Activated CD4-positive, alpha-beta T cell treated with anti-CD3 and anti-CD28 coated beads for 36 hours (primary cell): ENCODE measurements at regions of chr17 and their contacts with region 1.

Region 1: GRCh38 chr17:82098072-82098821 is at the start of gene FASN:
- DNase-seq: peak; percentile 97
- ATAC-seq: peak; percentile 86
- H3K4me3 Mint-ChIP-seq: peak within 1 kb of the TSS; percentile 78
- H3K27ac Mint-ChIP-seq: peak within 1 kb of the TSS; percentile 19
- H3K4me1 Mint-ChIP-seq: peaks cover 14% of the 10 kb centered on the region
- H3K27me3 Mint-ChIP-seq: no peaks in the 10 kb centered on the region
- total RNA-seq, gene FASN: 239 to 259 TPM

Region 2: DNA sequence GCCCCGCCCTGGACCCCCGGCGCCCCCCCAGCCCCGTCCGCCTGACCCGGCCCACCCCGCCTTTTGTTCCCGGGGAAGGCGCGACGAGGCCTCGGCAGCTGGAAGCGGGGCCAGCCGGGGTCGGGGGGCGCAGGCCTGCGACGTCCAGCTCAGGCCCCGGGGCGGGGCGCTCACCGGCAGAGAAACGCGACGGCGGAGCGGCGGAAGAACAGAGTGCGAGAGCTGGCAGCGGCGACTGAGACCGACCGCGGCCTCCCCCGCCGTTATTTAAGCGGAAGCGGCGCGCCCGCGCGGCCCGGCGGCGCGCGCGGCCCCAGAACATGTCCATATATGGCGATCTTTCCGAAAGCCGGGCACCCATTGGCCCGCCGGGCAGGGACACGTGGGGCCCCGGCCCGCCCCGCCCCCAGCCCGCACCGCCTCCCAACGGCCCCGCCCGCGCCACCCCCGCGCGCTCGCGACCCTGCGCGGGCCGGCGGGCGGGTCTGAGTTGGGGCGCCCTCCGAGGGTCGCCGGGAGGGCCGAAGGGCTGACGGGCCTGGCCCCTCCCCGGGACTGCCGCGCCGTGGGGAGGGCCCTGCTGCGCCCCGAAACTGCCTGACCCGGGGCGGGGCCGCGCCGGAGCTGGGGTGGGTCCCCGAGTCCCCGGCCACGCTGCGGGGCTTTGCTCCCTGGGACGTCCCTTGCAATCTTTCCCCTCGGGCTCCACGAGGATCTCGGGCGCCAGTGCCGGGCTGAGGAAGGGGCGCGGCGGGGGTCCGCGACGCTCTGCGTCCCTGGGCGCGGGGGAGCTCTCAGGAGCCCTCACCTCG is 585.5 kb before region 1 on chr17 and contains the start of gene ACTG1:
- CTCF ChIA-PET with region 1: no interaction called
- POLR2A ChIA-PET with region 1: no interaction called
- intact Hi-C with region 1: loop called in 1 of 2 experiments (anchors 2 kb)
- DNase-seq: peak; percentile 95
- ATAC-seq: peak; percentile 61
- H3K4me3 Mint-ChIP-seq: peak within 1 kb of the TSS; percentile 97
- H3K27ac Mint-ChIP-seq: peak within 1 kb of the TSS; percentile 89
- H3K4me1 Mint-ChIP-seq: peaks cover 21% of the 10 kb centered on the region
- H3K27me3 Mint-ChIP-seq: no peaks in the 10 kb centered on the region
- total RNA-seq, gene ACTG1: 4,119 to 5,987 TPM

Region 3: DNA sequence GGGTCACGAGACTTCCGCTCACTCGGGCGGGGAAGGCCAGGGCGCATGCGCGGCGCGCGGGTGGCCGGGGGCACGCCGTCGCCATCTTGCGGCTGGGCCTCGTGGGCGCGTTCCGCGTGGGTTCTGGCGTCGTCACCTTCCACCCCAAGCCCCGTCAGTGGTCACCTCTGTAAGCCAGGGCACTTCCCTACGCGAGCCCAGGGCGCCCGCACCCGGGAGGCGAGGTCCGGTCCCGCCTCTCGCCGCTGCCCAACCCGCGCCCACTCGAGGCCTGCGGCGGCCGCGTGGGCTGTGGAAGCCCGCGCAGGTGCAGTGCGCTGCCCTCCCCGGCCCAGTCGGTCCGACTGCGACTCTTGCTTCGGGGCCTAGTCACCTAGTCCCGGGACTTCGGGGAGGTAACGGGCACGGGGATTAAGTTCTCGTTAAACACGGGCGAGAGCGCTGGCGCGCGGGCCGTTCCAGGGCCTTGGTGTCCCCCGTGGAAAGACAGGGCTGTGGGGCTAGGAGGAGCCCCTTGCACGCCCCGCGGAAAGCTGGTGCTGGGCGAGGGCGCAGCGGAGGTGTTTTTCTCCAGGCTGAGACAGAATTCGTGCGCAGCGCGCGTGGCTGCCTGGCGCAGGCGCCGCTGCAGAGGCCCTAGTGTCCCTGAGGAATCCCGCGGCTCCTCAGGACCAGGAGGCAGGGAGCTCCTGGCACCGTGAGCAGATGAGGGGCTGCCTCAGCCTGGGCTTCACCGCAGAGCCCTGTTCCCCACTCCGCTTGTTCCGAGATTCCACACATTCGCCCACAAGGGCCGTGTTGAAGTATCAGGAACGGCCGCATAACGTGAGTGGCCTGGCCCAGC is 226.6 kb before region 1 on chr17:
- CTCF ChIA-PET with region 1: no interaction called
- POLR2A ChIA-PET with region 1: no interaction called
- intact Hi-C with region 1: loop called in 1 of 2 experiments (anchors 1 kb)
- DNase-seq: peak; percentile 98
- ATAC-seq: no peak
- H3K4me3 Mint-ChIP-seq: peak overlapping the region; percentile 81
- H3K27ac Mint-ChIP-seq: peak overlapping the region; percentile 92
- H3K4me1 Mint-ChIP-seq: peaks cover 34% of the 10 kb centered on the region
- H3K27me3 Mint-ChIP-seq: no peaks in the 10 kb centered on the region

Region 4: DNA sequence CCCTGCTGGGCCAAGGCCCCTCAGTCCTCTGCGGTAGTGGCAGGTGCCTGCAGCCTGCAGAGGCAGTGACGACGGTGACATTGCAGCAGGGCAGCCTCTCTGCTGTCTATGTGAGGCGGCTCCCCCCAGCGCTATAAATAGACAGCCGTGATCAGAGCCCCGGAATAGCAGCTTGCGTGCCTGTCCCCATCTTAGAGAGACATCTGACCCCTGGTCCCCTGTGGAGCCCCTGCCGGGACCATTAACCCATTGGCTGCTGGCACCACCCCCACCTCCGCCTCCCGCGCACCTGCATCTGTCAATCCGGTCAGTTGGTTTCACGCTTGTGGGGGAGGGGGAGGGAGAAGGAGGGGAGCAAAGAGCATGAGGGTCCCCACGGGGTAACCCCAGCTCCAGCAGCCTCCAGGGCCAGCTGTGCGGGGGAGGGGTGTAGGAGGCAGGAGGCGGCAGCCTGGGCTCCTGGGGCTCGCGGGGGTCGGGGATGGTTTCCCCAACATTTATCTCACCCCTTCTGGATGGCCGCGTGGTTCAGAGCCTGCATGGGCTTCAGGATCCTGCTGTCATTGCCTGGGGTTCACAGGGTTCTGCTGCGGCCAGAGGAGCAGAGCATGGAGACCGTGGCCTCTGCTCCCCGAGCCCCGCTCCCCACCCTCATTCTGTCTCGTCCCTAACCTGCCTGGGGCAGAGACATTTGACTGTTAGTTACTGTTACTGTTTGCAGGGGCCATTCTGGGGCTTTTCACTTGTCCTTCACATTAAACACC is 156.3 kb before region 1 on chr17:
- CTCF ChIA-PET with region 1: no interaction called
- POLR2A ChIA-PET with region 1: no interaction called
- intact Hi-C with region 1: loop called in 1 of 2 experiments (anchors 1 kb)
- DNase-seq: no peak
- ATAC-seq: no peak
- H3K4me3 Mint-ChIP-seq: no peak overlapping the region
- H3K27ac Mint-ChIP-seq: no peak overlapping the region
- H3K4me1 Mint-ChIP-seq: peaks cover 5% of the 10 kb centered on the region
- H3K27me3 Mint-ChIP-seq: peaks cover 5% of the 10 kb centered on the region

Region 5: DNA sequence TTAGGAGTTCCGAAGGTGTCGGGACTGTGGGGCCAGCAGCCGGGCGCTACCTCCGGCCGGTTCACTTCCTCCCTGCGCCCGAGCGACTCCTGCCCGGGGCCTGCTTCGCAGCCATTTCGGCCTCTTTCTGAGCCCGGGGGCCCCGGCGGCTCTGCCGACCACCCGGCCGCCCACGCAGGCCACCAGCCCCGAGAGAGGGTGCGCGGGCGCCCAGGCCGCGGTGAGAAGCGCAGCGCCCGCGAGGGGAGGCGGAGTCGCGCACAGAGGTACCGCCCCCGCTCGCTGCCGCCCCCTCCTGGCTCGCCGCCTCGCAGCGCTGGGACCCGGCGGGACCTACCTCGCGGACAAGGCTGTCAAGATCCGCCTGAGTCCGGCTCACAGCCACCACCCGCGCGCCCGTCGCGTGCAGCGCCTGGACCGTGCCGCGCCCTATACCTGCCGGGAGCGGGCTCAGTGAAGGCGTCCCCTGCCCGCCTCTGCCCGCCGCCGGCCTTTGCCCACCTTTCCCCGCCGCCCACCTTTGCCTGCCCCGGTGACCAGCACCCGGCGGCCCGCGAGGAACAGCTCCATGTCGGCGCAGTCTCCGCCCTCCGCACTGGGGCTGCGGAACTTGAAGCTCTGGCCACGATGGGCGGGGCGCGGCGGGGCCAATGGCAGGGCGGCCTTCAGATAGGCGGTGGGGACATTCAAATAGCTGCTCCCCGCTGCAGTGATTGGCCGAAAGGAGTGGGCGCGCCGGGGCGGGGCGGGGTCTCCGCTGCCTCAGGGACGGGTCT is 60.9 kb before region 1 on chr17 and contains the start of gene DCXR:
- CTCF ChIA-PET with region 1: interaction called, 6 read pairs
- POLR2A ChIA-PET with region 1: interaction called, 11 read pairs
- intact Hi-C with region 1: loop called in 1 of 2 experiments (anchors 1 kb)
- DNase-seq: peak; percentile 97
- ATAC-seq: peak; percentile 97
- H3K4me3 Mint-ChIP-seq: peak within 1 kb of the TSS; percentile 82
- H3K27ac Mint-ChIP-seq: peak within 1 kb of the TSS; percentile 80
- H3K4me1 Mint-ChIP-seq: peaks cover 23% of the 10 kb centered on the region
- H3K27me3 Mint-ChIP-seq: no peaks in the 10 kb centered on the region
- total RNA-seq, gene DCXR: 105 to 166 TPM

Region 6: DNA sequence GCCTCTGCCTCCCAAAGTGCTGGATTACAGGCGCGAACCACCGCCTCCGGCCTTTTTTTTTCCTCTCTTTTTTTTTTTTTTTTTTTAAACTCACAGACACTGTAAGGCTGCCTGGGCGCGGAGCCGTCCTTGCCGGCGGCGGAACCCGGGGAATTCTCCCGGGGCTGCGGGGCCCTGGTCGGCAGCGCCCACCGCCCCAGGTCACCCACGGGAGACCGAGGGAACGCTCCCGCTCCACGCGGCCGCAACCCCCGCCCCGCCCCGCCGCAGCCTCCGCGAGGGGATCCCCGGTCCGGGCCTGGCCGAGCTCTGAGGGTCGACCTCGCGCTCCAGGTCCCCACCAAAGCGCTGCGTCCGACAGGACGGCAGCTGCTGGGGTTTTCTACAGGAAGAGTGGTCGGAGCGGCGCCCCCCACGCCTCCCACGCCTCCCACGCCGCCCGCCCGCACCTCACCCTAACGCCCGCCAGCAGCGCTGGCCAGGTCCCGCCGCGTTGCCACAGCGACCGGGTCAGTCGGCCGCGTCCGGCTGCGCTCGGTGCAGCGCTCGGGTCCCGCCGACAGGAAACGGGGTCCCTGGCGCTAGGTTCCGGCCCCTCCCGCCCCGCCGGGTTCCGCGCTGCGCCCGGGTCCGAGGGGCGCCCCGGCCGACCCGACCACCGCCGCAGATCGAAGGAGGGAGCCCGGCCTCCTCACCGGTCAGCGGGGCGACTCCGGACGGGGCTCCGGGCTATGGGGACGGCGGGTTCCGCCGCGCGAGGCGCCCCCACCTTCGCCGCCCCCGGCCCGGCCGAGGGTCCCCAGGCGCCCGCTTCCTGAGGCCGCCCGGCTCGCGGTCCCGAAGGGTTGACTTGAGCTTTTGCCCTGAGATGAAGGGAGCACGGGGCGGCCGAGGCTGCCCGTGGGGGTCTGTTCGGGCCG is 114.3 kb after region 1 on chr17 and contains the start of gene CCDC57:
- CTCF ChIA-PET with region 1: no interaction called
- POLR2A ChIA-PET with region 1: no interaction called
- intact Hi-C with region 1: loop called in 1 of 2 experiments (anchors 2 kb)
- DNase-seq: peak; percentile 88
- ATAC-seq: peak; percentile 67
- H3K4me3 Mint-ChIP-seq: peak within 1 kb of the TSS; percentile 76
- H3K27ac Mint-ChIP-seq: peak within 1 kb of the TSS; percentile 66
- H3K4me1 Mint-ChIP-seq: peaks cover 39% of the 10 kb centered on the region
- H3K27me3 Mint-ChIP-seq: no peaks in the 10 kb centered on the region
- total RNA-seq, gene CCDC57: 41.6 to 43.8 TPM

Region 7: DNA sequence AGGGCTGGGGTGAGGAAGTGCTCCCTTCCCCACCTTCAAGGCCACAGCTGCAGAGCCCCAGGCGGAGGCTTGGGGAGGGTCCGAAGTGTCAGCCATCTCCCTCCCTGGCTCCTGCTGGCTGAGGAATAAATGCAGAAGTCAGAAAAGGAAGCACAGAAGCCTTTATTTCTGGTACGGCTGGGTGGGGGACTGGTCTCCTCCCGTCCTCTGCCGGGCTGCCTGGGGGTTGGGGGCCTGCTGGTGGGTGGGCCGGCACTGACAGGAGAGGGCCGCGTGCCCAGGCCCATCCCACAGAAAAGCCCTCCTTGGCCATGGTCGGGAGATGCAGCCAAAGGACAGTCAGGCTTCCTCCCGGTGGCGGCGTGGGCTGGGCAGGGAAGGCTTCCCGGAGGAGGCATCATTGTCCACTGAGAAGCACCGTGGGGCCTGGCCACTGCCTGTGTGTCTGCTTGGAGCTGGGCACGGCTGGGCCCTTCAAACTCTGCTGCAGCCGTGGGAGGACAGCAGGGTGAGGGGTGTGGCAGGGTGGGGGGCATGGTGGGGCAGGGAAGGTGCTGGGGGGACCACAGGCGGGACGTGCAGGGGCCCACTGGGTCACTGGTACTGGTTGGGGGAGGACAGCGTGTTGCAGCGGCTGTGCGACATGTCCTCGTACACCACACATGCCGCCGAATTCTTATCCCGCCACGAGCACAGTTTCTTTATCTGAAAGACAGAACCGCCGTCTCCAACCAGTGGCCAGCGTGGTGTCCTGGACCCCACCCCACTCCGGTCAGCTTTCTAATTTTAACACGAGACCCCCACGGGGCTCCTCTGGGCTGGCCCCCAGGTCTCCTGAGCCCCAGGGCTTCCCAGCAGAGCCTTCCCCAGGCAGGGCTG is 216.7 kb after region 1 on chr17:
- CTCF ChIA-PET with region 1: no interaction called
- POLR2A ChIA-PET with region 1: no interaction called
- intact Hi-C with region 1: no loop called
- DNase-seq: peak; percentile 23
- ATAC-seq: no peak
- H3K4me3 Mint-ChIP-seq: no peak overlapping the region
- H3K27ac Mint-ChIP-seq: peak overlapping the region; percentile 98
- H3K4me1 Mint-ChIP-seq: peaks cover 5% of the 10 kb centered on the region
- H3K27me3 Mint-ChIP-seq: no peaks in the 10 kb centered on the region

Region 8: GRCh38 chr17:82450170-82451106 is 352.2 kb after region 1 on chr17 and contains the start of gene CYBC1:
- CTCF ChIA-PET with region 1: no interaction called
- POLR2A ChIA-PET with region 1: no interaction called
- intact Hi-C with region 1: loop called in 1 of 2 experiments (anchors 1 kb)
- DNase-seq: peak; percentile 98
- ATAC-seq: peak; percentile 69
- H3K4me3 Mint-ChIP-seq: peak within 1 kb of the TSS; percentile 87
- H3K27ac Mint-ChIP-seq: peak within 1 kb of the TSS; percentile 97
- H3K4me1 Mint-ChIP-seq: peaks cover 46% of the 10 kb centered on the region
- H3K27me3 Mint-ChIP-seq: no peaks in the 10 kb centered on the region
- total RNA-seq, gene CYBC1: 286 to 329 TPM